CD4-positive, alpha-beta memory T cell (primary cell): ENCODE measurements at regions of chr3 and their contacts with region 1.

Region 1: DNA sequence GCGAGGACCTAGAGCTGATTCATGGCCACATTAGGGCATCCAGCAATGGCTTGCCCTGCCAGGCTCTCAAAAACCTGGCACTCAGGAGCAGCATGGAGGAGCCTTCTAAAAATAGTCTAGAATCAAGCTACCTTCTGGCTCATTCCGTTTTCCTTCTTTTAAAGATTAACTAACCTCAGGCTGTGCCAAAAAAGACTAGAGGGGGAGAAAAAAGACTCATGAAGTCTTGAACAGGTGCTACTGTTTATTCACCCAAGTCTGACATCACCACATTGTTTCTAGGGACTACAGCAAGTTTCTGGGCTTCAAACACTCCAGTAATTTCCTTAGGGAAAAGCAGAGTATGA is 125.8 kb downstream of the TNIK start:
- DNase-seq: no peak
- H3K4me3 ChIP-seq: no peak overlapping the region
- H3K4me3 Mint-ChIP-seq: no peak overlapping the region
- H3K27ac ChIP-seq: no peak overlapping the region
- H3K27ac Mint-ChIP-seq: no peak overlapping the region
- H3K4me1 ChIP-seq: peaks cover 20% of the 10 kb centered on the region
- H3K4me1 Mint-ChIP-seq: peaks cover 43 to 64% (median 48%) of the 10 kb centered on the region in 4 donors
- H3K27me3 ChIP-seq: no peaks in the 10 kb centered on the region
- H3K27me3 Mint-ChIP-seq: no peaks in the 10 kb centered on the region

Region 2: DNA sequence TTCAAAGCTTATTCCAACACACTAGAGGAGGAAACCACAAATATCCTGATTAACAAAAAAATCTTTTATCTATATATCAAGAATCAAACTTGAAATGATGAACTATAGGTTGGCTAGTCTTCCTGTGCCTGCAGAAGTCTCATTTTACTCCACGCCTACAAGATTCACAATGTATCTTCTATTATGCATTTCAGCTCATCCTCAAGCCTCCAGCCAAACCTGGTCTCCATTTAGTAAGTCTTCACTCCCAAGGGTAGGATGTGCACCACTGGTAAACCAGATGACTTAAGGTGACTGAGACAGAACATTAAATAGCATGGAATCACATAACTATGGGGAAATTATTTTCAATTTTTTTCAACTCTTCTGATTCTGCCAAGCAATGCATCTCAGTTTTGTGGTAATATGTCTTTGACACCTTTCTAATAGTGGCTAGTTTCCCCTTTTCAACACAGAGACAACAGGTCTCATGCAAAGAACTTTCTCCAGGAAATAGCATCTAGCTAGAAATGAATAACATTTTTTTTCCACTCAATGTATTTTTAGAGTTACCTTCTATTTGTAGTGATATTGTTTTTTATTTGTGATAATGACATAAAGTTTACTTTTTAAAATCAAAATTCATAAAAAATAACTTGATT is 41.2 kb before region 1 on chr3:
- CTCF ChIA-PET with region 1: no interaction called
- POLR2A ChIA-PET with region 1: no interaction called
- intact Hi-C with region 1: loop called (anchors 5 kb)
- DNase-seq: no peak
- H3K4me3 ChIP-seq: no peak overlapping the region
- H3K4me3 Mint-ChIP-seq: peak overlapping the region in 7 of 8 donors; percentile 18 to 78 (median 64)
- H3K27ac ChIP-seq: no peak overlapping the region
- H3K27ac Mint-ChIP-seq: peak overlapping the region in 6 of 7 donors; percentile 36 to 82 (median 70)
- H3K4me1 ChIP-seq: peaks cover 48% of the 10 kb centered on the region
- H3K4me1 Mint-ChIP-seq: peaks cover 47 to 72% (median 59%) of the 10 kb centered on the region in 4 donors
- H3K27me3 ChIP-seq: no peaks in the 10 kb centered on the region
- H3K27me3 Mint-ChIP-seq: no peaks in the 10 kb centered on the region